Endothelial cell of umbilical vein (primary cell): ENCODE measurements at regions of chr12 and their contacts with region 1.

Region 1: DNA sequence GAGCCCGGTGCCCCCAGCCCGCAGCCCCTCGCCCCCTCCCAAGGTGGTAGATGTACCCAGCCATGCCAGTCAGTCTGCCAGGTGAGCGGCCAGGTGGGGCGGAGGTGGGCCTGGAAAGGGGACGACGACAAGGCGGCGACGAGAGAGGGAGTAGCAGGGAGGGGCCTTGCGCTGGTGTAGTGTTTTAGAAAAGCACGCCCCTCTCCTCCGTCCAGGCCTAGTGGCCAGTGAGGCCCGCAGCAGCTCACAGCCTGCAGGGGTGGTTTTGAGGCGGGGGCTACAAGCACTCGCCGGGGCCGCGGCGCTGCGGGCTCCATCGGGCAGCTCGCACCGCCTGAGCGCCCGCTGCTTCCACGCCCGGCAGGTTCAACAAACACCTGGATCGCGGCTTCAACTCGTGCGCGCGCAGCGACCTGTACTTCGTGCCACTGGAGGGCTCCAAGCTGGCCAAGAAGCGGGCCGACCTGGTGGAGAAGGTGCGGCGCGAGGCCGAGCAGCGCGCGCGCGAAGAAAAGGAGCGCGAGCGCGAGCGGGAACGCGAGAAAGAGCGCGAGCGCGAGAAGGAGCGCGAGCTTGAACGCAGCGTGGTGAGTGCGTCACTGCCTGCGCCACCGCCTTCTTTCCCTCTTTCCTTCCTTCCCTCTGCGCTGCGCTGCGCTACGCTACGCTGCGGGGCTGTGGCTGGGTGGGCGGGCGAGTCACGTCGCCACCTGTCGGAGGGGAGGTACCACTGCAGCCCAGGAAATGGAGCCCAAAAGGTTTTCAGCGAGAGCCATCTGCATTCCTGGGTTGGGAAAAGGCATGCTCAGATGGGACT is 5.9 kb upstream of the RNU7-1 start:
- DNase-seq: peak; percentile 96
- H3K4me3 ChIP-seq: peak overlapping the region in 2 of 3 experiments; percentile 15 to 51
- H3K27ac ChIP-seq: peak overlapping the region; percentile 41
- H3K4me1 ChIP-seq: peaks cover 22% of the 10 kb centered on the region
- H3K27me3 ChIP-seq: no peaks in the 10 kb centered on the region
- CTCF ChIP-seq: peak; percentile 90 to 98
- POLR2A ChIP-seq: peak; percentile 94

Region 2: GRCh38 chr12:6167327-6168259 is 770.1 kb before region 1 on chr12:
- CTCF ChIA-PET with region 1: no interaction called
- POLR2A ChIA-PET with region 1: no interaction called
- dilution Hi-C with region 1: no loop called
- intact Hi-C with region 1: no loop called
- DNase-seq: peak; percentile 99
- H3K4me3 ChIP-seq: peak overlapping the region in 1 of 3 experiments; percentile 3
- H3K27ac ChIP-seq: peak overlapping the region; percentile 100
- H3K4me1 ChIP-seq: peaks cover 49% of the 10 kb centered on the region
- H3K27me3 ChIP-seq: no peaks in the 10 kb centered on the region
- CTCF ChIP-seq: no peak
- POLR2A ChIP-seq: peak; percentile 76

Region 3: DNA sequence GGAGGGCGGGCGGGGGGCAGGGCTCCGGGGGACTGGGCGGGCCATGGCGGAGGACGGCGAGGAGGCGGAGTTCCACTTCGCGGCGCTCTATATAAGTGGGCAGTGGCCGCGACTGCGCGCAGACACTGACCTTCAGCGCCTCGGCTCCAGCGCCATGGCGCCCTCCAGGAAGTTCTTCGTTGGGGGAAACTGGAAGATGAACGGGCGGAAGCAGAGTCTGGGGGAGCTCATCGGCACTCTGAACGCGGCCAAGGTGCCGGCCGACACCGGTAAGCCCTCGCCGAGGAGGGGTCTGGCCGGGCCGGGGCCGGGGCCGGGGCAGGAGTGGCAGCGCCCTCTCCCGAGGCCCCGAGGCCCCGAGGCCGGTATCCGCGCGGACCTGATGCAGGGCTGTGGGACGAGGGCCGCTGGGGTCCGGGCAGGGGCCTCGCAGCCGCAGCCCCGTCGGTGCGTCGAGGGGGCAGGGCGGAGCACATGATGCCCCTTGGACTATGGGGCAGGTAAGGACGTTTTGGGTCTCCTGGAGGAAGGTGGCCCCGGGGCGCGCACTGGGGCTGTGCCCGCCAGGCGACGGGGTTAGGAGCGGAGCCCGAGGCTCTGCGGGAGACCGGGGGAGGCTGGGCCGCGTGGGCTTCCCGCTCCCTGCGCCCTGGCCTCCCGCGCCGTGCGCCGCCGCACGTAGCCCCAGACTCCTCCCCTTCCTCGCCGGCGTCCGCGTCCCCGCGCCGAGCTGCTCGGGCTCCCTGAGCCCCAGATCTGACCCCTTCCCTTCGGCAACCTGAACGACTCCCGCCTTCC is 70.1 kb before region 1 on chr12 and contains the start of gene TPI1:
- CTCF ChIA-PET with region 1: interaction called, 27 read pairs
- POLR2A ChIA-PET with region 1: interaction called, 3 read pairs
- dilution Hi-C with region 1: no loop called
- intact Hi-C with region 1: loop called (anchors 1 kb)
- DNase-seq: peak; percentile 78
- H3K4me3 ChIP-seq: peak within 1 kb of the TSS; percentile 60 to 95 (median 75)
- H3K27ac ChIP-seq: peak within 1 kb of the TSS; percentile 43
- H3K4me1 ChIP-seq: peaks cover 32% of the 10 kb centered on the region
- H3K27me3 ChIP-seq: no peaks in the 10 kb centered on the region
- CTCF ChIP-seq: no peak
- POLR2A ChIP-seq: peak; percentile 98
- total RNA-seq, gene TPI1: 643 and 676 TPM in 2 replicates

Region 4: GRCh38 chr12:7304456-7304855 is 366.8 kb after region 1 on chr12:
- CTCF ChIA-PET with region 1: no interaction called
- POLR2A ChIA-PET with region 1: no interaction called
- dilution Hi-C with region 1: no loop called
- intact Hi-C with region 1: no loop called
- DNase-seq: no peak
- H3K4me3 ChIP-seq: no peak overlapping the region
- H3K27ac ChIP-seq: no peak overlapping the region
- H3K4me1 ChIP-seq: no peaks in the 10 kb centered on the region
- H3K27me3 ChIP-seq: peaks cover 0 to 2% of the 10 kb centered on the region in 2 experiments
- CTCF ChIP-seq: no peak
- POLR2A ChIP-seq: no peak